ENCODE measurements at regions of chr7 and their contacts with region 1.

Region 1: GRCh38 chr7:129376076-129376777 is 58.0 kb upstream of the STRIP2 start:
- DNase-seq: no peak
- ATAC-seq: peak; percentile 98
- H3K4me3 ChIP-seq: no peak overlapping the region
- H3K27ac ChIP-seq: no peak overlapping the region
- H3K4me1 ChIP-seq: peaks cover 8% of the 10 kb centered on the region; the same call in 1 of the 2 replicates
- H3K27me3 ChIP-seq: no peaks in the 10 kb centered on the region
- CTCF ChIP-seq: peak; percentile 74 to 81 (median 77)
- EP300 ChIP-seq: no peak
- POLR2A ChIP-seq: no peak
- RAD21 ChIP-seq: peak; percentile 52

Region 2: GRCh38 chr7:129205987-129206785 is 170.0 kb before region 1 on chr7:
- CTCF ChIA-PET with region 1: no interaction called
- POLR2A ChIA-PET with region 1: no interaction called
- RAD21 ChIA-PET with region 1: no interaction called
- SMC1A ChIA-PET with region 1: no interaction called
- in situ Hi-C with region 1: no loop called
- intact Hi-C with region 1: no loop called
- DNase-seq: no peak
- ATAC-seq: no peak
- H3K4me3 ChIP-seq: no peak overlapping the region
- H3K27ac ChIP-seq: no peak overlapping the region
- H3K4me1 ChIP-seq: no peaks in the 10 kb centered on the region
- H3K27me3 ChIP-seq: no peaks in the 10 kb centered on the region
- CTCF ChIP-seq: no peak
- EP300 ChIP-seq: no peak
- POLR2A ChIP-seq: no peak
- RAD21 ChIP-seq: no peak

Region 3: DNA sequence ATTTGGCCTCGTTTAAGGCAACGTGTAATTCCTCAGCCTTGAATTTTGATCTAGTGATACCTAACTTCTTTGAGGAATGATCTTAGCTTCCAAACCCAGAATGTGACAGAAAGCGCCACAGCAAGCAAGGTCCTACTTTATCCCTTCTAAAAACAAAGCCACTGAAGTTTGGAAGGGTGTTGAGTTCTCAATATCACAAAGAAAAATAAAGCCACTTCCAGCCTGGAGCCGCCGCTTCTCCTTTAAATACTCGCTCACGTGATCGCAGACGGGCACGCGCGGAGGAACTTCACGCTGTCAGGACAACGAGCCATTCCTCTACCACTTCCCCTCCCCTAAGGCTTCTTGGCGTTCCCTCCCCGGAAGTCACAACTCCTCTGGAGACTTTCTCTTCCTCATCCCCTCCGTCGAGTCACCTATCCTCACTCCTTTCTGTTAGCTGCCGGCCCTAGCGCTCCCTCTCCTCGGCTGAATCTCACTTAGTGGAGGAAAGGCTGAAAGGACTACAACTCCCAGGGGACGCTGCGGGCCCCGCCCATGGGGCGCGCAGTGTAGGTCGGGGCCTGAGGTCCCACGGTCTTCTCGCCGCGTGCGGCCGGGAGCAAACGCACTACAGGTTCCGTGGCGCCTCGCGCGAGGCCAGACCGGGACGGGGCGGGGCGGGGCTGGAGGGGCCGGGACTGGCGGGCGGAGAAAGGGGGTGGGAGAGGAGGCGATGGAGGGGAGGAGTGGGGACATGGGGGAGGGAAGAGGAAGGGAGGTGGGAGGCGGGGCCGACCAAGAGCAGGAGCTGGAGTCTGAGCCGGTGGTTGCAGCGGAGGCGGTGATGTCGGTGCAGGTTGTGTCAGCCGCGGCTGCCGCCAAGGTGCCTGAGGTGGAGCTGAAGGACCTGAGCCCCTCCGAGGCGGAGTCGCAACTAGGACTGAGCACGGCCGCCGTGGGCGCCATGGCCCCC is 151.7 kb before region 1 on chr7 and contains the start of gene AHCYL2:
- CTCF ChIA-PET with region 1: interaction called, 31 read pairs
- POLR2A ChIA-PET with region 1: no interaction called
- RAD21 ChIA-PET with region 1: interaction called, 5 read pairs
- SMC1A ChIA-PET with region 1: interaction called, 109 read pairs
- in situ Hi-C with region 1: no loop called
- intact Hi-C with region 1: no loop called
- DNase-seq: peak; percentile 89
- ATAC-seq: peak; percentile 97
- H3K4me3 ChIP-seq: peak within 1 kb of the TSS; percentile 72
- H3K27ac ChIP-seq: peak within 1 kb of the TSS; percentile 71
- H3K4me1 ChIP-seq: peaks cover 8% of the 10 kb centered on the region; the same call in 1 of the 2 replicates
- H3K27me3 ChIP-seq: no peaks in the 10 kb centered on the region
- CTCF ChIP-seq: no peak
- EP300 ChIP-seq: no peak
- POLR2A ChIP-seq: peak; percentile 90
- RAD21 ChIP-seq: no peak
- polyA plus RNA-seq, gene AHCYL2: 1.7 to 2.0 TPM

Region 4: GRCh38 chr7:129351320-129351719 is 24.9 kb before region 1 on chr7:
- CTCF ChIA-PET with region 1: interaction called, 561 read pairs
- POLR2A ChIA-PET with region 1: interaction called, 3 read pairs
- RAD21 ChIA-PET with region 1: interaction called, 10 read pairs
- SMC1A ChIA-PET with region 1: interaction called, 451 read pairs
- in situ Hi-C with region 1: no loop called
- intact Hi-C with region 1: no loop called
- DNase-seq: no peak
- ATAC-seq: peak; percentile 69
- H3K4me3 ChIP-seq: no peak overlapping the region
- H3K27ac ChIP-seq: no peak overlapping the region
- H3K4me1 ChIP-seq: peaks cover 8% of the 10 kb centered on the region
- H3K27me3 ChIP-seq: no peaks in the 10 kb centered on the region
- CTCF ChIP-seq: no peak
- EP300 ChIP-seq: no peak
- POLR2A ChIP-seq: no peak
- RAD21 ChIP-seq: no peak

Region 5: DNA sequence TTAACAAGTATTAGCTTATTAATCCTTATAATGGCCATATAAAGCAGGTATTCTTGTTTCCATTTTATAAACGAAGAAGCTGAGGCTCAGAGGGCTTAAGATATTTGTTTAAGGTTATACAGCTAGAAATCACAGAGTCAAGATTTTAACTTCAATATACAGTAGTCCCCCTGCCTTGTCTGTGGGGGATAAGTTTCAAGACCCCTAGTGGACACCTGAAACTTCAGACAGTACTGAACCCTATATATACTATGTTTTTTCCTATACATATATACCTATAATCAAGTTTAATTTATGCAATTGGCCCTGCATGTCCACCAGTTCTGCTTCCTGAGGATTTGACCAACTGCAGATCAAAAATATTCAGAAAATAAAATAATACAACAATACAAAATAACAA is 13.6 kb after region 1 on chr7:
- CTCF ChIA-PET with region 1: interaction called, 129 read pairs
- POLR2A ChIA-PET with region 1: interaction called, 3 read pairs
- RAD21 ChIA-PET with region 1: interaction called, 4 read pairs
- SMC1A ChIA-PET with region 1: interaction called, 65 read pairs
- in situ Hi-C with region 1: no loop called
- intact Hi-C with region 1: no loop called
- DNase-seq: no peak
- ATAC-seq: no peak
- H3K4me3 ChIP-seq: no peak overlapping the region
- H3K27ac ChIP-seq: no peak overlapping the region
- H3K4me1 ChIP-seq: no peaks in the 10 kb centered on the region; the same call in 1 of the 2 replicates
- H3K27me3 ChIP-seq: no peaks in the 10 kb centered on the region
- CTCF ChIP-seq: no peak
- EP300 ChIP-seq: no peak
- POLR2A ChIP-seq: no peak
- RAD21 ChIP-seq: no peak

Region 6: GRCh38 chr7:129433847-129434674 is 57.8 kb after region 1 on chr7 and contains the start of gene STRIP2:
- CTCF ChIA-PET with region 1: interaction called, 19 read pairs
- POLR2A ChIA-PET with region 1: interaction called, 4 read pairs
- RAD21 ChIA-PET with region 1: interaction called, 10 read pairs
- SMC1A ChIA-PET with region 1: interaction called, 11 read pairs
- in situ Hi-C with region 1: no loop called
- intact Hi-C with region 1: no loop called
- DNase-seq: peak; percentile 40
- ATAC-seq: peak; percentile 98
- H3K4me3 ChIP-seq: peak within 1 kb of the TSS; percentile 95
- H3K27ac ChIP-seq: peak within 1 kb of the TSS; percentile 9; the same call in 1 of the 2 replicates
- H3K4me1 ChIP-seq: no peaks in the 10 kb centered on the region
- H3K27me3 ChIP-seq: no peaks in the 10 kb centered on the region
- CTCF ChIP-seq: 0 out of 6 replicates have a peak, but pooled peaks of 1 of the 3 experiments have one; percentile 3
- EP300 ChIP-seq: no peak
- POLR2A ChIP-seq: peak; percentile 83
- RAD21 ChIP-seq: no peak
- polyA plus RNA-seq, gene STRIP2: 0.48 to 0.58 TPM

Region 7: DNA sequence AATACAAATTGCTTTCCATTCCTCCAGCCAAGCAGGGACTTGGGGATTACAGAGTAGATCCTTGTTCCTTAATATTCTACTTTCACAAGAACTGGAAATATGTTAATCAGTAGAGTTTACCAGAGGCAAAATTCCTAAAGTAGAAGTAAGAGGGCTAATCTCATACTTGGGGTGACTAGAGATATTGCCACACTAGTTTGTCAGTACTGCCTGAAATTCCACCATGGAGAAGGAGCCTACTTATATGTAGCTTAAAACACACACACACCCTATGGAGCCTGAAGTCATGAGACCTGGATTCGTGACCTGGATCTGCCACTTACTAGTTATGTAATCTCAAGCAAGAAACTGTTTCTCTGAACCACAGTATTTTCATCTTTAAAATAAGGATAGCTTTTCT is 91.9 kb after region 1 on chr7:
- CTCF ChIA-PET with region 1: interaction called, 58 read pairs
- POLR2A ChIA-PET with region 1: interaction called, 14 read pairs
- RAD21 ChIA-PET with region 1: interaction called, 90 read pairs
- SMC1A ChIA-PET with region 1: interaction called, 165 read pairs
- in situ Hi-C with region 1: no loop called
- intact Hi-C with region 1: no loop called
- DNase-seq: no peak
- ATAC-seq: no peak
- H3K4me3 ChIP-seq: no peak overlapping the region
- H3K27ac ChIP-seq: no peak overlapping the region
- H3K4me1 ChIP-seq: no peaks in the 10 kb centered on the region
- H3K27me3 ChIP-seq: no peaks in the 10 kb centered on the region
- CTCF ChIP-seq: no peak
- EP300 ChIP-seq: no peak
- POLR2A ChIP-seq: no peak
- RAD21 ChIP-seq: no peak

Measured in GM12878 (cell line).